ENCODE measurements at regions of chr17 and their contacts with region 1.

Region 1: GRCh38 chr17:7513850-7514419 is 29.8 kb downstream of the POLR2A start:
- DNase-seq: no peak
- ATAC-seq: no peak
- H3K4me3 ChIP-seq: no peak overlapping the region
- H3K27ac ChIP-seq: no peak overlapping the region
- H3K4me1 ChIP-seq: no peaks in the 10 kb centered on the region
- H3K27me3 ChIP-seq: no peaks in the 10 kb centered on the region
- CTCF ChIP-seq: no peak

Region 2: GRCh38 chr17:7242717-7243576 is 271.0 kb before region 1 on chr17:
- CTCF ChIA-PET with region 1: no interaction called
- POLR2A ChIA-PET with region 1: no interaction called
- intact Hi-C with region 1: no loop called
- DNase-seq: peak; percentile 85
- ATAC-seq: peak; percentile 29
- H3K4me3 ChIP-seq: peak overlapping the region; percentile 86
- H3K27ac ChIP-seq: peak overlapping the region; percentile 69
- H3K4me1 ChIP-seq: peaks cover 17% of the 10 kb centered on the region
- H3K27me3 ChIP-seq: no peaks in the 10 kb centered on the region
- CTCF ChIP-seq: no peak

Region 3: DNA sequence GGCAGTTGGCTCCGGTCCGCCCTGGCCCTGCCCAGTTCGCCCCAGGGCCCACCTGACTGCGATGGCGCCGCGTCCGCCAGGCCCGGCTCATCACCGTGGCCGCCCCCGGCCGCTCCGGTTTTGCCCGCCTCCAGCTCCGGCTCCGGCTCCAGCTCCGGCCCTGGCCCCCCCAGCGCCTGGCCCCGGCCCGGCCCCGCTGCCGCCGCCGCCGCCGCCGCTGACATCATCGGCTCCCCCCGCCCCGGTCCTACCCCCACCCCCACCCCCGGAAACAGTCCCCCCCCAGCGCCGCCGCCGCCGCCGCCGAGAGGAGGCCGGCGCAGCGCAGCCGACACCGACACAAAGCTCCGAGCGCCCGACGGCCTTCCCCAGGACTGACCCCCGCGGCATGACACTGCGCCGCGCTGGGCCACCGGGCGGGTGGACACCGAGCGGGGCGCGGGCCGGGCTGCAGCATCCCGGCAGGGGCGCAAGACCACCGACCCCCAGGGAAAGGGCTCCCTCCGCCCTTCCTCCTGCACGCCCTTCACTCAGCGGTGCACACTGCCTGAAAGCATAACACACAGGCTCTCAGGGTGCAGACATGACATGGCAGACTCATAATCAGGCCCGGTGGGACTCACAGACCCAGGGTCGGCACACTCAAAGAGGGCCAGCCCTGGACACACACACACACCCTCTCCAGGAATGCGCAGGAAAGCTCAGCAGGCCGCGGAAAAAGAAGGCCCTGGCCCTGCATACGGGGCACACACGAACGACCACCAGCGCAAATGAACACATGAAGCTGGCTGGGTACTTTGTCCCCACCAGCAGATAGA is 34.3 kb before region 1 on chr17 and contains the start of gene ZBTB4:
- CTCF ChIA-PET with region 1: no interaction called
- POLR2A ChIA-PET with region 1: no interaction called
- intact Hi-C with region 1: no loop called
- DNase-seq: peak; percentile 37
- ATAC-seq: peak; percentile 9
- H3K4me3 ChIP-seq: peak within 1 kb of the TSS; percentile 82
- H3K27ac ChIP-seq: peak within 1 kb of the TSS; percentile 62
- H3K4me1 ChIP-seq: peaks cover 33% of the 10 kb centered on the region
- H3K27me3 ChIP-seq: no peaks in the 10 kb centered on the region
- CTCF ChIP-seq: no peak
- total RNA-seq, gene ZBTB4: 14.7 and 18.4 TPM in 2 replicates

Region 4: GRCh38 chr17:7561028-7561575 is 47.2 kb after region 1 on chr17:
- CTCF ChIA-PET with region 1: interaction called, 8 read pairs
- POLR2A ChIA-PET with region 1: no interaction called
- intact Hi-C with region 1: loop called (anchors 1 kb)
- DNase-seq: peak; percentile 84
- ATAC-seq: peak; percentile 64
- H3K4me3 ChIP-seq: peak overlapping the region; percentile 95
- H3K27ac ChIP-seq: peak overlapping the region; percentile 73
- H3K4me1 ChIP-seq: peaks cover 37% of the 10 kb centered on the region
- H3K27me3 ChIP-seq: no peaks in the 10 kb centered on the region
- CTCF ChIP-seq: peak; percentile 64